Left cardiac atrium (tissue), 4 donors: ENCODE measurements at regions of chr9 and their contacts with region 1.

Region 1: DNA sequence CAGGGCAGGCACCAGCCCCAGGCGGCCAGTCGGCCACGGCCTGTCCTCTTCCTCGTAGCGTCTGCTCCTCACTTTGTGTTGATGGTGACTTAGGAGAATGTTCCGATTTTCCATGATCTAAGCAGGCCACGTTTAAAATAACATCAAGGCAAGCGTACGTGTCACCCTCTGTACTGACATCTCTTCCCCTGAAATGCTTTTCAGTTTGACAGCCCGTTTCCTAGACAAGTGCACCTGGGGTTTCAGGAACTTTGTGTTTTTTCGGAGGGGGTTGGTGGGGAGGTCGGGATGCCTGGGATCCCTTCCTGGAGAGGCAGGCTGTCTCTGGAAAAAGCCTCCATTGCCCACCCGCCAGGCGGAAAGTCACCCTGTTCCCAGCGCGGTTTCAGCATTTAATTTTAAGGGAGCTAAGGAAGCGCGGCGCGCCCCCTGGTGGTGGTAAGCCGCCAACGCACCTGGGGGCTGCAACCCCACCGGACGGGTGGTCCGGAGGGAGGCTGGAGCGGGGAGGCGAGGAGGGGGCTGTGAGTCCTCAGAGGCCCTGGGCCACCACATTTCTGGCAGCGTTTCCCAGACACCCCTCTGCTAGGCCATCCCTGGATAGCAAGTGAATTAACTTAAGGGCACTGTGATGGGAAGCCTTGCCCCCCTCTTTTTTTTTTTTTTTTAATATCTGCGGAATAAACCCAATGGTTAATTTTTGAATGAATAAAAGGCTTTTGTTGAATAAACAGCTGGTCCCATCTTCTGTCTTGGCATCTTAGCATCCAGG is 29.5 kb upstream of the HMCN2 start:
- DNase-seq: peak; percentile 74
- ATAC-seq: peak; percentile 51

Region 2: DNA sequence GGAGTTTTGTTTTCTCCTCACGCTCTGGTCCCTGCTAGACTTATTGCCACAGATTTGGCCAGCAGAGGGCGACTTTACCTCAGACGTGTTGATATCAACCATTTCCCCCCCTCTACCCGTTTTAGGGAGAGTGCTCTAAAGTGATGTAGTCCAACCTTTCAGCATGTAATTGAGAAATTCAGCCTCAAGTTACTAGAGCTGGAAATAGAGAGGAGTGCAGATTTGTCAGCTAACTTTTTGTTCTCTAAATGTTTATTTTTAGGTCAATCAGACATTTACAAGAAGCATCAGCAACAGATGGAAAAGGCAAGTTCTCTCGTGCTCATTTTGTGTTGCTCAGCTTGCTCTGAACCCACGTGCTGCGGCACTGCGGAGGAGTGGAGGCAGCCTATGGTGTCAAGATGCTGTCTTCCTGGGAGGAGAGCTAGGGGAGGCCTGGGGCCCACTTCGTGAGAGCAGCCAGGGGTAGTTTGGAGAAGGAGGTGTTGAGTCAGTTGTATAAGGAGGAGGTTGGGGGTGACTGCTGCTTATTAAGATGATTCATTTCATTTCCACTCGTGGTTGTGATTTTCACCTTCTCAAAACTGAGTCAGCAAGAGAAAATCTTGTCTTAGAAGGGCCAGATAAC is 128.7 kb before region 1 on chr9:
- intact Hi-C with region 1: loop called (anchors 1 to 2 kb)
- DNase-seq: peak; percentile 89
- ATAC-seq: peak; percentile 87 to 90

Region 3: DNA sequence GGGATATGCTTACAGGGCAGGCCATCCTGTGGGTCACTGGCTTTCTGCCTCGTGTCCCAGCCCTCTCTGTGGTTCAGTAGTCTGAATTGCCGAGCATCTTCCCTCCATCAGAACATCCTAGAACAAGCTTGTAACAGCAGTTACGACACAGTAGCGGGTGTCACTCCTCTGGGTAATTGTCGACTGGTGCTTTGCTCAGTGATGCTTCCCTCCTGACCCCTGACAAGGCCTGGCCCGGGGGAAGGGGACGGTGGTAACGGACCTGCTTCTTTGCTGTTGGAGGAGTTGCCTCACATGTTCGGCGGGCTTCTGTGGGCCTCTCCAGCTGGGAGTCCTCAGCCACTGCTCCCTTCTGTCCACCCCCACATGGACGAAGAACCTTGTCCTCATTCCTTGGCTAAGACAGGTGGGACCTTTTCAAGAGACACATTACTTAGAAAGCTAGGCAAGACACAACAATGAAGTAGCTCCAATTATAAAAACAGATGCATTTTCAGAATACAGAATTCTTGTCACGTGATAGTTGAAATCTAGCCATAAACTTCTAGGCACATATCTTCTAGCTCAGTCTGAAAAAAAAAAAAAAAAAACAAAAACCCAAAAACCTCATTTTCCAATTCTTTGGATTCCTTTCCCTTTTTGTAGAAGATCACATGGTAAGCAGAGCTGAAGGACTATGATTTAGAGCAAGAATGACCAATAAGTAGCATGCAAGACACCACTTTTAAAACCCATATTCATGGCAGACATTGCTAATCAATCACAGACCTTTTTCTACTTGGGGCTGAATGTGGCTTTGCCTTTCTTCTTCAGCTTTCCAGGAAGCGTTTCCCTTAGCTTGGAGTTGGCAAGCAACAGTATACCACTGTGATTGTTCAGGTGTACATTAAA is 54.5 kb after region 1 on chr9:
- intact Hi-C with region 1: no loop called
- DNase-seq: no peak
- ATAC-seq: peak; percentile 21 to 49